ENCODE measurements at regions of chr5 and their contacts with region 1.

Region 1: DNA sequence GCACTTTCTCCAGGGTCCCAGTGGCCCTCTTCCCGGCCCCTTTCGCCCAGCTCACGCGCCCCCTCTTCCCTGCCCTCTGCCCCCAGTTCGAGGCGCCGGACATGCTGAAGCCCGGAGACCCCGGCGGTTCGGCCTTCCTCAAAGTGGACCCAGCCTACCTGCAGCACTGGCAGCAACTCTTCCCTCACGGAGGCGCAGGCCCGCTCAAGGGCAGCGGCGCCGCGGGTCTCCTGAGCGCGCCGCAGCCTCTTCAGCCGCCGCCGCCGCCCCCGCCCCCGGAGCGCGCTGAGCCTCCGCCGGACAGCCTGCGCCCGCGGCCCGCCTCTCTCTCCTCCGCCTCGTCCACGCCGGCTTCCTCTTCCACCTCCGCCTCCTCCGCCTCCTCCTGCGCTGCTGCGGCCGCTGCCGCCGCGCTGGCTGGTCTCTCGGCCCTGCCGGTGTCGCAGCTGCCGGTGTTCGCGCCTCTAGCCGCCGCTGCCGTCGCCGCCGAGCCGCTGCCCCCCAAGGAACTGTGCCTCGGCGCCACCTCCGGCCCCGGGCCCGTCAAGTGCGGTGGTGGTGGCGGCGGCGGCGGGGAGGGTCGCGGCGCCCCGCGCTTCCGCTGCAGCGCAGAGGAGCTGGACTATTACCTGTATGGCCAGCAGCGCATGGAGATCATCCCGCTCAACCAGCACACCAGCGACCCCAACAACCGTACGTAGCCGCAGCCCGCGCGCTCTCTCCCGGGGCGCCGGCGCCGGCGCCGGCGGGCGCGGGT is 1.1 kb downstream of the PRDM6 start:
- DNase-seq: no peak
- H3K4me3 ChIP-seq: peak overlapping the region; percentile 71 to 97
- H3K27ac ChIP-seq: peak overlapping the region; percentile 95 to 99
- H3K4me1 ChIP-seq: no peaks in the 10 kb centered on the region
- H3K27me3 ChIP-seq: no peaks in the 10 kb centered on the region
- CTCF ChIP-seq: no peak

Region 2: GRCh38 chr5:122500245-122501075 is 589.6 kb before region 1 on chr5:
- intact Hi-C with region 1: loop called (anchors 5 kb)
- DNase-seq: no peak
- H3K4me3 ChIP-seq: peak overlapping the region in 1 of 2 donors; percentile 22
- H3K27ac ChIP-seq: peak overlapping the region; percentile 59 to 63
- H3K4me1 ChIP-seq: peaks cover 5 to 9% of the 10 kb centered on the region in 2 donors
- H3K27me3 ChIP-seq: no peaks in the 10 kb centered on the region
- CTCF ChIP-seq: peak in 2 of 3 experiments; percentile 28 to 43

Region 3: DNA sequence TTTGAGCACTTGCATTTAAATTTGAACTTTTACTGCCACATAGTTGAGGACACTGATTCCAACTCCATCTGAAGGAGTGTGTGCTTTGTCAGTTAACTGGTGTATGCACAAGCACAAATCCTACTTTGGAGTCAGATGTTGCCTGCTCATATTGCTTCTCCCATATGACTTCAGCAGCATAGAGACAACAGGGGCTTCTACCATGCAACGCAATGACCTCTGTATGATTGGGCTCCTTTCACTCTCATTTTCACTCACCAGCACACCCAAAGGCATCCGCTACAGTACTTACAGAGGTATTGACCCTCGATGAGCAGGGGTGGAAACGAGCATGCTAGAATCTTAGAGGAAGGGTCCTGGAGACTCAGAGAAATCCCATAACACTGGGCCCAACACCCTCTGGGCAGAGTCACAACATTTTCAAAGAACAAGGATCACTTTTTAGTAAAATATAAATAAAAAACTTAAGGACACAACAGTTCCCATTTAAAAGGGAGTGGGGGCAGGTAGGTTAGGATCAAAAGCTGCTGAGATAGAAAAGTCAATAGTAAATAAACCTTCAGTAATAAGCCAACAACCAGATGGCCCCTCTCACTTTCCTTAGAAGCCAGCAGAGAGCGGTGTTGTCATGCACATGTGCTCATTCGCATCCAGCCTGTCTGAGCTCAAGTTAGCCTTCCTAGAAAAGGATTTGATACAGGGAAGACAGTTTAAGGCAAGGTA is 574.2 kb before region 1 on chr5:
- intact Hi-C with region 1: loop called (anchors 5 kb)
- DNase-seq: peak in 1 of 2 donors; percentile 69
- H3K4me3 ChIP-seq: no peak overlapping the region
- H3K27ac ChIP-seq: no peak overlapping the region
- H3K4me1 ChIP-seq: no peaks in the 10 kb centered on the region
- H3K27me3 ChIP-seq: no peaks in the 10 kb centered on the region
- CTCF ChIP-seq: peak; percentile 15 to 72 (median 52)

Region 4: GRCh38 chr5:122774861-122775549 is 315.1 kb before region 1 on chr5 and contains the start of gene SNX2:
- intact Hi-C with region 1: loop called (anchors 2 kb)
- DNase-seq: peak; percentile 71 to 97
- H3K4me3 ChIP-seq: peak within 1 kb of the TSS; percentile 77 to 99
- H3K27ac ChIP-seq: peak within 1 kb of the TSS; percentile 79 to 94
- H3K4me1 ChIP-seq: peaks cover 0 to 15% of the 10 kb centered on the region in 2 donors
- H3K27me3 ChIP-seq: no peaks in the 10 kb centered on the region
- CTCF ChIP-seq: no peak
- total RNA-seq, gene SNX2: 15.6 TPM

Region 5: DNA sequence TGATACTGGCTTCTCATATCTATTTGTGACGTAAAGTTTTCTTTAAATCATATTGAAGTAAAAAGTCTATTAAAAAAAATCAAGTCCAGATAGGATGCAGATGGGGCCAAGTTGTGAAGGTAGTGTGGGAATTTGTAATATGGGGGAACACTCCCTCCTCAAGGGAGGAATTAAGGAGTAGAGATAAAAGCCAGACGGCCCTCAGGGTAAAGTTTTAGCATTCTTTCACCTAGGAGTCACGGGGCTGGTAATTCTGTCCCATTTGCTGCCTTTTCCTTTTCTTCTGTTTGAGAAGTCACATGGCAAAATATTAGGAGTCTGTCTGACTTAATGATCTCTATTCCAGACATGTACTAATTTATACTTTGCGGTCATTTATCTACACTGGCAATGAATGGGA is 182.9 kb before region 1 on chr5:
- intact Hi-C with region 1: loop called (anchors 5 kb)
- DNase-seq: no peak
- H3K4me3 ChIP-seq: peak overlapping the region in 1 of 2 donors; percentile 24
- H3K27ac ChIP-seq: peak overlapping the region; percentile 41 to 68
- H3K4me1 ChIP-seq: peaks cover 0 to 16% of the 10 kb centered on the region in 2 donors
- H3K27me3 ChIP-seq: no peaks in the 10 kb centered on the region
- CTCF ChIP-seq: no peak

Region 6: GRCh38 chr5:123423278-123424149 is 333.4 kb after region 1 on chr5 and contains the start of gene CEP120:
- intact Hi-C with region 1: loop called (anchors 5 kb)
- DNase-seq: peak; percentile 93 to 99
- H3K4me3 ChIP-seq: peak within 1 kb of the TSS; percentile 73 to 86
- H3K27ac ChIP-seq: peak within 1 kb of the TSS; percentile 83 to 87
- H3K4me1 ChIP-seq: peaks cover 0 to 8% of the 10 kb centered on the region in 2 donors
- H3K27me3 ChIP-seq: no peaks in the 10 kb centered on the region
- CTCF ChIP-seq: peak; percentile 68 to 87 (median 81)
- total RNA-seq, gene CEP120: 11.6 TPM

Region 7: GRCh38 chr5:123511648-123512605 is 421.8 kb after region 1 on chr5 and contains the start of gene CSNK1G3:
- intact Hi-C with region 1: loop called (anchors 2 kb)
- DNase-seq: peak; percentile 94 to 98
- H3K4me3 ChIP-seq: peak within 1 kb of the TSS; percentile 87 to 92
- H3K27ac ChIP-seq: peak within 1 kb of the TSS; percentile 90 to 97
- H3K4me1 ChIP-seq: peaks cover 0 to 10% of the 10 kb centered on the region in 2 donors
- H3K27me3 ChIP-seq: no peaks in the 10 kb centered on the region
- CTCF ChIP-seq: no peak
- total RNA-seq, gene CSNK1G3: 28.5 TPM